PC-9 (cell line): ENCODE measurements at regions of chr10 and their contacts with region 1.

Region 1: GRCh38 chr10:11757821-11758463 is 15.8 kb downstream of the ECHDC3 start:
- DNase-seq: peak; percentile 48 to 84
- H3K4me3 ChIP-seq: no peak overlapping the region
- H3K27ac ChIP-seq: no peak overlapping the region
- H3K4me1 ChIP-seq: no peaks in the 10 kb centered on the region
- H3K27me3 ChIP-seq: no peaks in the 10 kb centered on the region
- CTCF ChIP-seq: peak; percentile 81

Region 2: DNA sequence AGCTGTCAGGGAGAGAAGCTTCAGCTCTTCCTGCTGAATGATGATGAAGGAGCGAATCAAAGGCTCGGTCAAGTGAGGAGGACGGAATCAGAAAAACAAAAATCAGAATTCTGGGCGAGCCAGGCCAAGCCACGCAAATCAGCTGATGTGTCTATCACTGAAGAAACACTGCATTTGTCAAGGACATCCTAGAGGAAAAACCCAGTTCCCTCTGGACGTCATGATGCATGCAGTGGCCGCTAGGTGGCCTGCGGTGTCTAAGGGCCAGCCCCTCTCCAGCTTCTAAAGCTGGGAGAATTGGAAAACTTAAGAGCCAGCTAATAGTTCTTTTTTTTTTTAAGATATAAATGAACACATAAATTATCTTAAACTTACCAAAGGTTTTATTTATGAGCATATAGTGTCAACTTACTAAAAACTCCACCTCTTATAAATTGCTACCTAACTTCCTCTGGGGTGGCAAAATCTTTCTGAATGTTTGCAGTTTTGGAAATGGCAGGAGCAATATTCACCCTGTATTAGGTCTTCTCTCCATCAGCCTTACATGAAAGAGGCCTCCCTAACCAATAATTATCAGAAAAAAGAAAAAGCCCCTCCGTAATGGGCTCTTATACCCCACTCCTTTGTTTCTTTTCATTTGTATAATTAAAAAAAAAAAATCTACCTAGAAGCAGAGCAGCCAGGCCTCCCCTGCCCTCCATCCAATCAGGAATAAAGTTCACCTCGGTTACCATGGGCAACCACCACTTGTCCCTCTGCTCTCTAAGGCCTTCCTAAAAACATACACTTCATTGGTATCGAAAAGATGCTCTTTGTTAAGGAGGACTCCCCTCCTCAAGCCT is 333.3 kb before region 1 on chr10:
- CTCF ChIA-PET with region 1: no interaction called
- POLR2A ChIA-PET with region 1: no interaction called
- intact Hi-C with region 1: loop called (anchors 1 kb)
- DNase-seq: peak in 1 of 2 experiments; percentile 40
- H3K4me3 ChIP-seq: no peak overlapping the region
- H3K27ac ChIP-seq: no peak overlapping the region
- H3K4me1 ChIP-seq: no peaks in the 10 kb centered on the region
- H3K27me3 ChIP-seq: peaks cover 4% of the 10 kb centered on the region; the same call in 1 of the 2 replicates
- CTCF ChIP-seq: peak; percentile 80

Region 3: GRCh38 chr10:11515596-11516430 is 242.1 kb before region 1 on chr10:
- CTCF ChIA-PET with region 1: interaction called, 3 read pairs
- POLR2A ChIA-PET with region 1: no interaction called
- intact Hi-C with region 1: loop called (anchors 1 kb)
- DNase-seq: peak in 1 of 2 experiments; percentile 25
- H3K4me3 ChIP-seq: no peak overlapping the region
- H3K27ac ChIP-seq: 0 out of 2 replicates have a peak overlapping the region, but pooled peaks have one; percentile 17
- H3K4me1 ChIP-seq: no peaks in the 10 kb centered on the region
- H3K27me3 ChIP-seq: no peaks in the 10 kb centered on the region
- CTCF ChIP-seq: peak; percentile 82

Region 4: DNA sequence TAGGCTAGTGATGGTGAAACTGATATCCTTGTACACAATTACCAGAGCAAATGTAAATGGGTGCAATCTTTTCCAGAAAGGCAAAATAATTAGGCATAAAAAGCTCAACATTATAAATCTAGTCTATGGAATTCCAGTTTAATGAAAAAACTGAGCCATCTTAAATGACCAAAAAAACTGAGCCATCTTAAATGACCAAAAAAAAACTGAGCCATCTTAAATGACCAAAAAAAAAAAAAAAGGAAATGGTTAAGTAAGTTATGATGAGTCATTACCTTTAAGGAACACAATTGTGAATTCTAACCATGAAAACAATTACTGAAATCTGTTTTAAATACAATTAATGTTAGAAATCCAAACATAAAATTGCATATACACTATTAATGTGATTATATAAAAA is 171.8 kb before region 1 on chr10:
- CTCF ChIA-PET with region 1: no interaction called
- POLR2A ChIA-PET with region 1: no interaction called
- intact Hi-C with region 1: no loop called
- DNase-seq: no peak
- H3K4me3 ChIP-seq: no peak overlapping the region
- H3K27ac ChIP-seq: peak overlapping the region; percentile 9; the same call in 1 of the 2 replicates
- H3K4me1 ChIP-seq: peaks cover 29% of the 10 kb centered on the region
- H3K27me3 ChIP-seq: no peaks in the 10 kb centered on the region
- CTCF ChIP-seq: no peak

Region 5: GRCh38 chr10:11663763-11664555 is 94.0 kb before region 1 on chr10:
- CTCF ChIA-PET with region 1: no interaction called
- POLR2A ChIA-PET with region 1: no interaction called
- intact Hi-C with region 1: no loop called
- DNase-seq: no peak
- H3K4me3 ChIP-seq: no peak overlapping the region
- H3K27ac ChIP-seq: no peak overlapping the region
- H3K4me1 ChIP-seq: no peaks in the 10 kb centered on the region
- H3K27me3 ChIP-seq: no peaks in the 10 kb centered on the region
- CTCF ChIP-seq: no peak

Region 6: DNA sequence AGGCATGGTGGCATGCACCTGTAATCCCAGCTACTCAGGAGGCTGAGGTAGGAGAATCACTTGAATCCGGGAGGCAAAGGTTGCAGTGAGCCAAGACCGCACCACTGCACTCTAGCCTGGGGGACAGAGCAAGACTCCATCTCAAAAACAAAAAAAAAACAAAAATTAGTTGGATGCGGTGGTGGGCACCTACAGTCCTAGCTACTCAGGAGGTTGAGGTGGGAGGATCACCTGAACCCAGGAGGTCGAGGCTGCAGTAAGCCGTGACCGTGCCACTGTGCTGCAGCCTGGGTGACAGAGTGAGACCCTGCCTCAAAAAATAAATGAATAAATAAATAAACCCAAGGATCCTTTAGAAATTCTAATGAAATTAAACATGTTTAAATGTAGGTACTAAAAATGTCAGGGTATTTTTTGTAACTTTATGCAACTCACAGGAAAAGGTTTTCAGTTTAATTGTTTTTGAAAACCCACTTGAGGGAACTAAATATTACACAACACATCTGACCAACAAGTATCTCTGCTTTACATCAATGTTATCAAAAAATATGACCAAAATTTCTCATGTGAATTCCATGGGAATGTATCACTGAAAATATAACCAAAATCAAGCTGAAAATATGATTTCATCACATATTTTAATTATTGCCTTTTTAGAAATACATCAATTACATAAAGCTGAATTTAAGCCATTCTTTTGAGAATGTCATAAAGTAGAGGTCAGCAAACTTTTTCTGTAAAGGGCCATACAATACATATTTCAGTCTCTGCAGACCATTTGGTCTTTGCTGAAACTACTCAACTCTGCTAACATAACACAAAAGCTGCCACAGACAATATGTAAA is 260.7 kb after region 1 on chr10:
- CTCF ChIA-PET with region 1: no interaction called
- POLR2A ChIA-PET with region 1: no interaction called
- intact Hi-C with region 1: no loop called
- DNase-seq: no peak
- H3K4me3 ChIP-seq: no peak overlapping the region
- H3K27ac ChIP-seq: no peak overlapping the region
- H3K4me1 ChIP-seq: no peaks in the 10 kb centered on the region
- H3K27me3 ChIP-seq: no peaks in the 10 kb centered on the region
- CTCF ChIP-seq: no peak